ENCODE measurements at regions of chr7 and their contacts with region 1.

Region 1: DNA sequence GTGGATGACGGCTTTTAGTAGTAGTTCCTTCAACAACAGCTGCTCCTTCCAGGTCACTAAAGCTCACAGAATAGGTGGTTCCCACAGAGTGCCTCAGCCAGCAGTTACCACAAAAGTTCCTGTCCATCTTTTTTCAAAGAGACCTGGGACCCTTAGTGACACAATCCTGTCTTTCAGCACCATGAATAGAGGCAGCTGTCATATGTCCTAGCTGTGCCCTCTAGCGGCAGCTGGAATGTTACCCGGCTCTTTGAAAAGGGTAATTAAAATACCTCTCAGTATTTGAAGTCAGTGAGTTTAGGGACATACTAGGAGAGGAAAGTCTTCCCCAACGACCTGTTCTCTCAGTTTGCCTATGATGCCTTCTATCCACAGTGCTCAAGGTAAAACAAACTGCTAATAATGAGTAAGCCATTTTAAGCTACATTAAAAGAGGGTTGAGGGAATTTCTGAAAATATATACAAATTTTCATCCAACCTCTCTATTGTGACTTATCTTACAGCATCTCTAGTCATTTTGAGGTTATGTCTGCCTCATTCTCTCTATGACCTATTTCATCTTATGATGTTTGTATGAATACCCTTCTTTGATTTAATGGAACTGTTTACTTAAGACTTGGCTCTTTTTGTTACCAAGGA is 290.8 kb downstream of the NXPH1 start:
- DNase-seq: no peak
- ATAC-seq: peak; percentile 78
- H3K4me3 ChIP-seq: no peak overlapping the region
- H3K27ac ChIP-seq: no peak overlapping the region
- H3K4me1 ChIP-seq: no peaks in the 10 kb centered on the region
- H3K27me3 ChIP-seq: no peaks in the 10 kb centered on the region
- CTCF ChIP-seq: peak; percentile 37 to 76 (median 71); a peak in 5 of 6 replicates
- POLR2A ChIP-seq: no peak
- RAD21 ChIP-seq: peak; percentile 53

Region 2: GRCh38 chr7:8418629-8419245 is 305.5 kb before region 1 on chr7:
- CTCF ChIA-PET with region 1: interaction called, 5 read pairs
- POLR2A ChIA-PET with region 1: no interaction called
- RAD21 ChIA-PET with region 1: no interaction called
- intact Hi-C with region 1: loop called (anchors 5 kb)
- DNase-seq: peak; percentile 57
- ATAC-seq: peak; percentile 88
- H3K4me3 ChIP-seq: no peak overlapping the region
- H3K27ac ChIP-seq: no peak overlapping the region
- H3K4me1 ChIP-seq: no peaks in the 10 kb centered on the region
- H3K27me3 ChIP-seq: 0 out of 2 replicates have a peak, but pooled peaks cover 2% of the 10 kb centered on the region
- CTCF ChIP-seq: peak; percentile 42 to 87 (median 71); a peak in 5 of 6 replicates
- POLR2A ChIP-seq: no peak
- RAD21 ChIP-seq: peak; percentile 71

Region 3: GRCh38 chr7:9231630-9232121 is 507.5 kb after region 1 on chr7:
- CTCF ChIA-PET with region 1: no interaction called
- POLR2A ChIA-PET with region 1: no interaction called
- RAD21 ChIA-PET with region 1: no interaction called
- intact Hi-C with region 1: no loop called
- DNase-seq: no peak
- ATAC-seq: no peak
- H3K4me3 ChIP-seq: no peak overlapping the region
- H3K27ac ChIP-seq: no peak overlapping the region
- H3K4me1 ChIP-seq: no peaks in the 10 kb centered on the region
- H3K27me3 ChIP-seq: no peaks in the 10 kb centered on the region
- CTCF ChIP-seq: no peak
- POLR2A ChIP-seq: no peak
- RAD21 ChIP-seq: no peak

Measured in HCT116 (cell line).